Activated CD8-positive, alpha-beta memory T cell treated with anti-CD3 and anti-CD28 coated beads, Interleukin-2, amount 10 ng/mL, durations not matched to agents 7 days and 5 days (primary cell): ENCODE measurements at regions of chr6 and their contacts with region 1.

Region 1: DNA sequence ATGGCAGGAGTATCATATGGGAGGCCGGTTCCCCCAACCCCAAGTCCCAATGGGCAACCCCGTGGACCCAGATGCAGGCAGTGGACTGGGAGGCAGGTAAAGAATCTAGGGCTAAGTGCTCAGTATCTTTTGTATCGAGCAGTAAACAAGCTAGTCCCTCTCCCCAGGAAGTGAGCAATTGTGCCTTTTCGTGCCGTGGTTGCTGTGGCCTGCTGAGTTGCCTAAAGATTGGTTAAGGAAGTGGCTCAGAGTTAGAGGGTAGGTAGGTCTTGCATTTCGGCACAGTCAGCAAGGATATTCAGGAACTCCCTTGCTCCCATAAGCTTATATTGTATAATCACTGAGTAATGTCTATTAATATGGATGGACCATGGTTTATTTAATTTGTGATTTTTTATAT is 1.3 kb upstream of the DNAH8 start:
- DNase-seq: peak; percentile 96
- ATAC-seq: peak; percentile 92
- H3K4me3 Mint-ChIP-seq: peak overlapping the region; percentile 42
- H3K27ac Mint-ChIP-seq: peak overlapping the region; percentile 87
- H3K4me1 Mint-ChIP-seq: peaks cover 50% of the 10 kb centered on the region
- H3K27me3 Mint-ChIP-seq: peaks cover 9% of the 10 kb centered on the region

Region 2: GRCh38 chr6:38702558-38703397 is 11.0 kb before region 1 on chr6 and contains the start of gene GLO1:
- CTCF ChIA-PET with region 1: interaction called, 25 read pairs
- DNase-seq: peak; percentile 98
- ATAC-seq: peak; percentile 100
- H3K4me3 Mint-ChIP-seq: peak within 1 kb of the TSS; percentile 96
- H3K27ac Mint-ChIP-seq: peak within 1 kb of the TSS; percentile 96
- H3K4me1 Mint-ChIP-seq: peaks cover 50% of the 10 kb centered on the region
- H3K27me3 Mint-ChIP-seq: peaks cover 4% of the 10 kb centered on the region
- total RNA-seq, gene GLO1: 130 to 149 TPM

Region 3: DNA sequence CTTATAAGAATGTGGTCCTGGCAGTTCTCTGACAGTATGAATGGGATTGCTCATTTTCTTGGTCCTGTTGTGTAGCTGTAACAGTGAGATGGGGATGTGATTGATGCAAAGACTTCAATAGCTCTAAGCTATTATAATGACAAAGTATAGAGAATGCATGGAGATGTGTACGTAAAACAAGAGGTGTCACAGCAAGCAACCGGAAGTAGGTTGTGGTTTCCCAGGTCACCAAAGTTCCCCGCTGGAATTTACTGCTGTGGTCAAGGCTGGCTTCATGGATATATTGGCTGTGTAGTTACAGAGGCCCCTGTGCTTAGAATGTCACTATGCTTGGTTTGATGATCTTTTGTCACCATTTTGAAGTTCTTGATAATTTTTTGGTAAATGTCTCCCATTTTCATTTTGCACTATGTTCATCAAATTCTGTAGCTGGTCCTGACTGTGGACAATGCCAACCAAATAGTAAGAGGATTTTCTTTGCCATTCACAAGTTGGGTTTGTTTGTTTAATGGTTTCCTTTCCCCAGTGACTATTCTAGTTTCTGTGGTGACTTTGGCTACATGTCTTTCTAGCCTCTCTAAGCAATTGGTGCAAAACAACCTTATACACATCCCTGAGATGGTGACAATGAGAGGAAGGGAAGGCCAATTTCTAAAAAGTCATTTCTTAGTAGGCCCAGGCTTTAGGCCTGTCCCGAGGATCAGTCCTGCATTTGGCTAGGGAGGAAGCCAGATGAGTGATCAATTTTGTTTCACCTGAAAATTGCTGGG is 11.8 kb after region 1 on chr6:
- CTCF ChIA-PET with region 1: interaction called, 21 read pairs
- DNase-seq: peak; percentile 56
- ATAC-seq: peak; percentile 82
- H3K4me3 Mint-ChIP-seq: no peak overlapping the region
- H3K27ac Mint-ChIP-seq: peak overlapping the region; percentile 80
- H3K4me1 Mint-ChIP-seq: peaks cover 35% of the 10 kb centered on the region
- H3K27me3 Mint-ChIP-seq: no peaks in the 10 kb centered on the region